ENCODE measurements at regions of chr12 and their contacts with region 1.

Region 1: GRCh38 chr12:100668945-100669536 is 95.6 kb downstream of the GAS2L3 start:
- DNase-seq: peak; percentile 67
- H3K4me3 Mint-ChIP-seq: no peak overlapping the region
- H3K27ac Mint-ChIP-seq: no peak overlapping the region
- H3K4me1 Mint-ChIP-seq: no peaks in the 10 kb centered on the region
- H3K27me3 Mint-ChIP-seq: peaks cover 5% of the 10 kb centered on the region

Region 2: DNA sequence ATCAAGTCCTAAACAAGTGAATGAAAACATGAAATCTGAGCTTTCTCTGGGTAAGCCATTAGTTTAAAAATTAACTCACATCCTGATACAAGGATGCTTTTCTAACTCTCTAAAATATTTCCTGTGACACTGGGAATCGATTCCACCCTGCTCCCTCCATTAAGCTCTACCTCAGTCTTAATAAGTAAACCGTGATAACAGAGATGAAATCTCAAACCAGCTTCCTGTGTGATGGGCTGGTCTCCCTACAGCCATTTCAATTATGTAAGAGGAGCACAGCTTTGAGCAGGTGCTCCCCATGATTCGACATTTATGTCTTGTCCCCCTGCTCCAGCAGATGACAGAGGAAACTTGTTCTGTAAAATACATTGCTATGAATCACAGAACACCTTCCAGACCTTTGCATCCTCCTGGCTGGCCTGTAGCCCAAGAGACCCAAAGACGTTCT is 36.6 kb before region 1 on chr12:
- CTCF ChIA-PET with region 1: no interaction called
- POLR2A ChIA-PET with region 1: no interaction called
- intact Hi-C with region 1: no loop called
- DNase-seq: no peak
- H3K4me3 Mint-ChIP-seq: no peak overlapping the region
- H3K27ac Mint-ChIP-seq: no peak overlapping the region
- H3K4me1 Mint-ChIP-seq: no peaks in the 10 kb centered on the region
- H3K27me3 Mint-ChIP-seq: no peaks in the 10 kb centered on the region

Region 3: DNA sequence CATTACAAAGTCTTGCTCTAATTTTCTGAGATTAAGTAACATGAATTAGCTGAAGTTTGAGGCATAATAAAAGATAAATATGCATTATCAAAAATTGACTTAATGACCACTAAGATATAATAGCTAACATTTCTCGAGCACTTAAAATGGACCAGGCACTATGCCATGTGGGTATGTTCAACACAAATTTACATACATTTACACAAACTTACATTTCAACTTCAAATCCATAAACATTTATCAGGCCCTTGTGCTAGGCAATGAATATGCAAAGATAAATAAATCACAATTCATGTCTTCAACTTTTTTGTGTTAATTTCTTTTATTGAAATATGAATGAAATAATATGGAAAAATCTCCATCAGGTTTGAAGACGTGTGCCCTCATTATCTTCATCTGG is 13.1 kb after region 1 on chr12:
- CTCF ChIA-PET with region 1: interaction called, 12 read pairs
- POLR2A ChIA-PET with region 1: no interaction called
- intact Hi-C with region 1: no loop called
- DNase-seq: no peak
- H3K4me3 Mint-ChIP-seq: no peak overlapping the region
- H3K27ac Mint-ChIP-seq: no peak overlapping the region
- H3K4me1 Mint-ChIP-seq: no peaks in the 10 kb centered on the region
- H3K27me3 Mint-ChIP-seq: peaks cover 7% of the 10 kb centered on the region

Region 4: GRCh38 chr12:100741084-100741711 is 72.2 kb after region 1 on chr12:
- CTCF ChIA-PET with region 1: no interaction called
- POLR2A ChIA-PET with region 1: no interaction called
- intact Hi-C with region 1: loop called (anchors 2 kb)
- DNase-seq: no peak
- H3K4me3 Mint-ChIP-seq: no peak overlapping the region
- H3K27ac Mint-ChIP-seq: no peak overlapping the region
- H3K4me1 Mint-ChIP-seq: no peaks in the 10 kb centered on the region
- H3K27me3 Mint-ChIP-seq: no peaks in the 10 kb centered on the region

Region 5: DNA sequence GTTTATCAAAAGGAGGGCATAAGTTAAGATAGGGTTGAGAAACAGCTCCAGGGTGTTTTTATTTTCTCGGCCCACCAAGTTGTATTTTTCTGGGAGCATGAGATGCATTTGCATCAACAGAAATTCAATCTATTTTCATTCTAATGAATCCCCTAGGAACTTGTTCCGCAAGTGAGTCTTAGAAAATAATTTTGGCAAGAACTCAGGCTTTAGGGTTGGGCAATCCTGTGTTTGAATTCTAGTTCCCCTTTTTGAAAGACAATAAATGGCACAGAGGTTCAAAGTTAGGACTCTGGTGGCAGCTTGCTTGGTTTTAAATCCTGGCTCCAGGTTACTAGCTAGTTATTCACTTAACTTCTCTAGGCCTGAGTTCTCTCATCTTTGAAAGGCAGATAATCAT is 517.2 kb after region 1 on chr12:
- CTCF ChIA-PET with region 1: no interaction called
- POLR2A ChIA-PET with region 1: no interaction called
- intact Hi-C with region 1: no loop called
- DNase-seq: no peak
- H3K4me3 Mint-ChIP-seq: no peak overlapping the region
- H3K27ac Mint-ChIP-seq: no peak overlapping the region
- H3K4me1 Mint-ChIP-seq: no peaks in the 10 kb centered on the region
- H3K27me3 Mint-ChIP-seq: peaks cover 2% of the 10 kb centered on the region

Measured in activated CD4-positive, alpha-beta memory T cell treated with anti-CD3 and anti-CD28 coated beads for 36 hours (primary cell).